ENCODE measurements at regions of chr5 and their contacts with region 1.

Region 1: GRCh38 chr5:143403593-143404415 is at the start of gene NR3C1:
- DNase-seq: peak; percentile 94
- ATAC-seq: peak; percentile 73
- H3K4me3 ChIP-seq: peak within 1 kb of the TSS; percentile 76 to 94 (median 93)
- H3K4me3 Mint-ChIP-seq: peak within 1 kb of the TSS; percentile 95
- H3K27ac ChIP-seq: peak within 1 kb of the TSS; percentile 90 to 96
- H3K27ac Mint-ChIP-seq: peak within 1 kb of the TSS; percentile 99
- H3K4me1 ChIP-seq: peaks cover 33 to 37% of the 10 kb centered on the region in 2 donors
- H3K4me1 Mint-ChIP-seq: peaks cover 44% of the 10 kb centered on the region
- H3K27me3 ChIP-seq: no peaks in the 10 kb centered on the region
- H3K27me3 Mint-ChIP-seq: no peaks in the 10 kb centered on the region
- CTCF ChIP-seq: peak; percentile 53
- total RNA-seq, gene NR3C1: 218 and 233 TPM in 2 replicates

Region 2: DNA sequence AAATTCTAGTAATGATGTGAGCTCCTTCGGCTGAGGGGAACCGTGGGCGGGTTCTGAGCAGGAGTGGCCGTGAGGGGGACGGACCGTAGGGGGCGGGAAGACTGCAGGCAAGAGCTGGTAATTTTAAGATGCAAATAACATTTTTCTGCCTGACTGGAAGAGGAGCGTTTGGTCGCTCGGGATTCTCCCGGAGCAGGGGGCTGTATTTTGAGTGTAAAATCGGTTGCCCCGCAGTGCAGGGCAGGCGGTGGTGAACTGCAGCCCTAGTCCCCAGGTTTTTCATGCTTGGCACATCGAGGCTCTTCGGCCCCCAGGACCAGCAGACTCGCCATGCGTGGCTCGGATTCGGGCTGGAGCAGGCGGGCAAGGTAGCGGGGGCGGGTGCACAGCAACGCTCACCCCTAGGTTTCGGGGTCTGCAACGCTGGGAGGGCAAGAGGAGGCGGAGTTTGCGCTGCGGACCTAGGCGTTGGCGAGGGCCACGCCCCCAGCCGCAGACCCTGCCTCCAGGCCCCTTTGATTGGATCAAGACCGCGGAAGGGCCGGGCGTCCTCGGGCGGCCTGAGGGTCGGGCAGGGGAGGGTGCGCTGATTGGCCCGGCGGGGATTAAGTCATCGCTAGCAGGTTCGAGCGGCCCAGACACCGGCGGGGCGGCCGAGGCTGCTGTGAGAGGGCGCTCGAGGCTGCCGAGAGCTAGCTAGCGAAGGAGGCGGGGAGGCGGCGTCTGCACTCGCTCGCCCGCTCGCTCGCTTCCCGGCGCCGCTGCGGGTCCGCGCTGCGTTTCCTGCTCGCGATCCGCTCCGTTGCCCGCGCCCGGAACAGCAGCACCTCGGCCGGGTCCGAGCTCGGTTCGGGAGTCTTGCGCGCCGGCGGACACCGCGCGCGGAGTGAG is 633.8 kb before region 1 on chr5 and contains the start of gene ARHGAP26:
- CTCF ChIA-PET with region 1: no interaction called
- POLR2A ChIA-PET with region 1: interaction called, 3 read pairs
- intact Hi-C with region 1: loop called (anchors 5 kb)
- DNase-seq: peak; percentile 96
- ATAC-seq: peak; percentile 94
- H3K4me3 ChIP-seq: peak within 1 kb of the TSS; percentile 78 to 90 (median 90)
- H3K4me3 Mint-ChIP-seq: peak within 1 kb of the TSS; percentile 97
- H3K27ac ChIP-seq: peak within 1 kb of the TSS; percentile 3 to 68
- H3K27ac Mint-ChIP-seq: peak within 1 kb of the TSS; percentile 85
- H3K4me1 ChIP-seq: peaks cover 11 to 12% of the 10 kb centered on the region in 2 donors
- H3K4me1 Mint-ChIP-seq: peaks cover 20% of the 10 kb centered on the region
- H3K27me3 ChIP-seq: no peaks in the 10 kb centered on the region
- H3K27me3 Mint-ChIP-seq: no peaks in the 10 kb centered on the region
- CTCF ChIP-seq: peak; percentile 9
- total RNA-seq, gene ARHGAP26: 22.5 and 27.8 TPM in 2 replicates

Region 3: DNA sequence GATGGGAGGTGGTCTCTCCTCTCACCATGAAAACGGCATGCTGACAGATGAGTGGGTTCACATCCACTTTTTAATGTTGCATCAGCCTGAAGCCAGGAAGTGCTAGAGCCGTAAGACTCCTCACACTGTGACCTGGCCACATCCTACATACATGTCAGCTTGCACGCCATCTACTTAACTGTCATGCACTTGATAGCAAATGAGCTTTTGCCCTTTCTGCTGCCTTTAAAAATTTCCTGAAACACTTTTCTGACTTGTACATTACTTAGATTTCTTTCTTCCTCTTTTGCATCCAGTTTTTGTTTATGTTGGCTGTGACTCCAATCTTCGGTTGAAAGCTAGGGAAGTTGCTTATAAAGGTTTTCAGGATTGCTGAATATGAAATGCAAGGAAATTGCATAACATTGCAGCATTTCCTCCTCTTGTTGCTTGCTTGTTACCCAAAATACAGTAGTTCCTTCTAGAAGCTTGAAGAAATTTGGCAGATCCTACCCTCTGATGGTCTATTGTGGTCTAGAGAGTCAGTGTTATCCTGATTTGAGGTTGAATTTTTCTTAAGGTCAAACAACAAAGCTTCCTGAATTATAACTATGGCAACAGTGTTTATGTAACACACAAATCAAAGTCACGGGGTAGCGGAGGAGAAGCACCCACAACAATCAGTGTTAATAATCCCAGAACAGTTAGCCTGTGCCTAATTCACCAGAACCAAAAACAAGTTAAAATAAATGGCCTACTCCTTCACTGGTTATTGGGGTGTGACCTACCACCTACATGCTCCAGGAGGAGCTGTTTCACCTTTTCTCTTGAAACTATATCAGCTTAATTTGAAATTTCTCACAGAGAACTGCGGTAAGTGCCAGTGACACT is 401.1 kb before region 1 on chr5:
- CTCF ChIA-PET with region 1: interaction called, 25 read pairs
- POLR2A ChIA-PET with region 1: interaction called, 5 read pairs
- intact Hi-C with region 1: loop called (anchors 1 kb)
- DNase-seq: peak; percentile 76
- ATAC-seq: peak; percentile 72
- H3K4me3 ChIP-seq: peak overlapping the region in 1 of 5 experiments; percentile 40
- H3K4me3 Mint-ChIP-seq: peak overlapping the region; percentile 54
- H3K27ac ChIP-seq: peak overlapping the region; percentile 81 to 94
- H3K27ac Mint-ChIP-seq: peak overlapping the region; percentile 92
- H3K4me1 ChIP-seq: peaks cover 59 to 62% of the 10 kb centered on the region in 2 donors
- H3K4me1 Mint-ChIP-seq: peaks cover 86% of the 10 kb centered on the region
- H3K27me3 ChIP-seq: no peaks in the 10 kb centered on the region
- H3K27me3 Mint-ChIP-seq: no peaks in the 10 kb centered on the region
- CTCF ChIP-seq: peak; percentile 74

Region 4: DNA sequence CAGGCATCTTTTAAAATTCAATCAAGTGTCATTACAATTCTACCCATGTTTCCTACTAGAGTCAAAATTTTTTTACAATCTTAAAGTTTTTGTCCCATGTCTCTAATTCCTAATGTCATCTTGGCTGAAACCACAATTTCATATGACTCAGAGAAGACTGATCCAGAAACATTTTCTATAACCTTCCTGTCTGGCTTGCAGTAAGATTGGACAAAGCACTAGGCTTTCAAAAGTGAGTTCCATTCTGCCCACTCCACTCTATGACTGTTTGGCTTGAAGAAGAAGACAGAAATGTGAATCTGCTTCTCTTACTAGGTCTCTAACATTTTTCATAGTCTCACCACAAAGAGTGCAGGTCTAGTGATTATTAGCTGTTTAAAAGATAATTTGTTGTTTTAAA is 89.1 kb before region 1 on chr5:
- CTCF ChIA-PET with region 1: interaction called, 3 read pairs
- POLR2A ChIA-PET with region 1: interaction called, 4 read pairs
- intact Hi-C with region 1: loop called (anchors 5 kb)
- DNase-seq: no peak
- ATAC-seq: no peak
- H3K4me3 ChIP-seq: no peak overlapping the region
- H3K4me3 Mint-ChIP-seq: peak overlapping the region; percentile 1
- H3K27ac ChIP-seq: peak overlapping the region in 1 of 2 donors; percentile 61
- H3K27ac Mint-ChIP-seq: no peak overlapping the region
- H3K4me1 ChIP-seq: peaks cover 12 to 23% of the 10 kb centered on the region in 2 donors
- H3K4me1 Mint-ChIP-seq: peaks cover 62% of the 10 kb centered on the region
- H3K27me3 ChIP-seq: no peaks in the 10 kb centered on the region
- H3K27me3 Mint-ChIP-seq: no peaks in the 10 kb centered on the region
- CTCF ChIP-seq: no peak

Region 5: DNA sequence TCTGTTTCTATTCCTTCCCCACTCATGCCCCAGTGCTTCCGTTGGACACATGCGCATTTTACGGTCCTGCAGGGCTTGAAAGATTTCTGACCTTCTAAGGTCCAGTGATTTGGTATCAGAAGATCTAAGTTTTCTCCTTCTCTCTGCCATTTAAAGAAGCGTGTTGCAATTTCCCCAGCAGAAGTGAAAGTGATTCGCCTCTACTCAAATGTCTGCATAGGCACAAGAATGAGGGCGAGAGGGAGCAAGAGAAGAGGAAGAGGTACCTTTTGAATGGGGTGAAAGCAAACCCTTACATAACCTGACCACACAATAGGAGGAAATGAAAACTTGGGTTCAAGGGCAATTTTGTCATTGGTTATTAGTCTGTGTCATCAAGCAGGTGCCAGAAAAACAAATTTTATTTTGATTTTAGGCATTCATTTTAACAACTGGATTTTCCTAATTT is 31.4 kb after region 1 on chr5:
- CTCF ChIA-PET with region 1: interaction called, 43 read pairs
- POLR2A ChIA-PET with region 1: interaction called, 51 read pairs
- intact Hi-C with region 1: loop called (anchors 1 kb)
- DNase-seq: peak; percentile 88
- ATAC-seq: peak; percentile 85
- H3K4me3 ChIP-seq: peak overlapping the region; percentile 42 to 81 (median 68)
- H3K4me3 Mint-ChIP-seq: peak overlapping the region; percentile 94
- H3K27ac ChIP-seq: peak overlapping the region; percentile 90 to 93
- H3K27ac Mint-ChIP-seq: peak overlapping the region; percentile 97
- H3K4me1 ChIP-seq: peaks cover 28 to 31% of the 10 kb centered on the region in 2 donors
- H3K4me1 Mint-ChIP-seq: peaks cover 65% of the 10 kb centered on the region
- H3K27me3 ChIP-seq: no peaks in the 10 kb centered on the region
- H3K27me3 Mint-ChIP-seq: no peaks in the 10 kb centered on the region
- CTCF ChIP-seq: no peak

Region 6: GRCh38 chr5:143824851-143825720 is 421.3 kb after region 1 on chr5:
- CTCF ChIA-PET with region 1: interaction called, 38 read pairs
- POLR2A ChIA-PET with region 1: interaction called, 4 read pairs
- intact Hi-C with region 1: loop called (anchors 2 kb)
- DNase-seq: peak; percentile 85
- ATAC-seq: peak; percentile 96
- H3K4me3 ChIP-seq: no peak overlapping the region
- H3K4me3 Mint-ChIP-seq: no peak overlapping the region
- H3K27ac ChIP-seq: no peak overlapping the region
- H3K27ac Mint-ChIP-seq: no peak overlapping the region
- H3K4me1 ChIP-seq: peaks cover 3 to 5% of the 10 kb centered on the region in 2 donors
- H3K4me1 Mint-ChIP-seq: peaks cover 8% of the 10 kb centered on the region
- H3K27me3 ChIP-seq: no peaks in the 10 kb centered on the region
- H3K27me3 Mint-ChIP-seq: no peaks in the 10 kb centered on the region
- CTCF ChIP-seq: peak; percentile 95